Heart right ventricle (tissue), 16 donors: ENCODE measurements at regions of chr11 and their contacts with region 1.

Region 1: DNA sequence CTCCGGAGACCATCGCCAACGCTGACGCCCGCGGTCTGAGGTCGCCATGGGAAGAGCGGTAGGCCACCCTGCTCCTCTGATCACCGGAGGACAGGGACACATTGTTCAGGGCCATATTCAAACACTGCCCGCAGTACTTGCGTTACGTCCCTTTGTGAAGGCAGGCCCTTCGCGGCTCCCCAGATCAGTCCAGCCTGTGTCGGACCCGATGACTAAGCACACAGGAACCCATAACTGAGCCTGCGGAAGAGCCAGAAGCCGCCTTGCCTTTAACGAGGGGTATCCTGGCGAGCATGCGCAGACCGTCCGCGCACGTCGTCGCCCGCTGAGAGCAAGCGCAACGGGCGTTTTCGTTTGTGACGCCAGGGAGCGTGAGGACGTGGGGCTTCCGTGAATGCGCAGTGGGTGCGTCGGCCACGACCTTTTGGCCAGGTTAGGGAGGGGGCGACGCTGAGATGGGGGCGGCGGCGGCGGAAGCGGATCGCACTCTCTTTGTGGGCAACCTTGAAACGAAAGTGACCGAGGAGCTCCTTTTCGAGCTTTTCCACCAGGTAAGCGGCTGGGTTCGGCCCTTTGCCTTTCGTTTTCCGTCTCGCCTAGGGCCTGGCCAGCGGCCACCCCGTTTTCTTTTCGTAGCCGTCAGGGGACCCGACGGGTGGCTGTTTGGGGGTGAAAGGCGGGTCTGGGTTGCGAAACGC is at the starts of genes C11orf71 and RBM7:
- DNase-seq: peak; percentile 98 to 99
- ATAC-seq: peak; percentile 97 to 99 (median 98)
- H3K4me3 ChIP-seq: peak within 1 kb of the TSS; percentile 66 to 89 (median 76)
- H3K27ac ChIP-seq: peak within 1 kb of the TSS; percentile 93 to 100 (median 98)
- H3K4me1 ChIP-seq: peaks cover 0 to 73% (median 59%) of the 10 kb centered on the region in 9 donors
- H3K27me3 ChIP-seq: no peaks in the 10 kb centered on the region
- CTCF ChIP-seq: peak in 3 of 9 donors; percentile 14 to 23 (median 19)
- total RNA-seq, gene C11orf71: 7.1 to 14.4 (median 10.9) TPM
- total RNA-seq, gene RBM7: 16.8 to 29.3 (median 21.3) TPM

Region 2: GRCh38 chr11:114295676-114296604 is 104.4 kb before region 1 on chr11 and contains the start of gene NNMT:
- intact Hi-C with region 1: loop called in 1 of 10 experiments (anchors 10 kb)
- DNase-seq: peak; percentile 56 to 66
- ATAC-seq: peak; percentile 50 to 88 (median 80)
- H3K4me3 ChIP-seq: peak within 1 kb of the TSS in 9 of 10 donors; percentile 26 to 60 (median 53)
- H3K27ac ChIP-seq: peak within 1 kb of the TSS; percentile 77 to 98 (median 91)
- H3K4me1 ChIP-seq: peaks cover 2 to 49% (median 40%) of the 10 kb centered on the region in 9 donors
- H3K27me3 ChIP-seq: no peaks in the 10 kb centered on the region
- CTCF ChIP-seq: no peak
- total RNA-seq, gene NNMT: 6.9 to 111 (median 19.8) TPM

Region 3: DNA sequence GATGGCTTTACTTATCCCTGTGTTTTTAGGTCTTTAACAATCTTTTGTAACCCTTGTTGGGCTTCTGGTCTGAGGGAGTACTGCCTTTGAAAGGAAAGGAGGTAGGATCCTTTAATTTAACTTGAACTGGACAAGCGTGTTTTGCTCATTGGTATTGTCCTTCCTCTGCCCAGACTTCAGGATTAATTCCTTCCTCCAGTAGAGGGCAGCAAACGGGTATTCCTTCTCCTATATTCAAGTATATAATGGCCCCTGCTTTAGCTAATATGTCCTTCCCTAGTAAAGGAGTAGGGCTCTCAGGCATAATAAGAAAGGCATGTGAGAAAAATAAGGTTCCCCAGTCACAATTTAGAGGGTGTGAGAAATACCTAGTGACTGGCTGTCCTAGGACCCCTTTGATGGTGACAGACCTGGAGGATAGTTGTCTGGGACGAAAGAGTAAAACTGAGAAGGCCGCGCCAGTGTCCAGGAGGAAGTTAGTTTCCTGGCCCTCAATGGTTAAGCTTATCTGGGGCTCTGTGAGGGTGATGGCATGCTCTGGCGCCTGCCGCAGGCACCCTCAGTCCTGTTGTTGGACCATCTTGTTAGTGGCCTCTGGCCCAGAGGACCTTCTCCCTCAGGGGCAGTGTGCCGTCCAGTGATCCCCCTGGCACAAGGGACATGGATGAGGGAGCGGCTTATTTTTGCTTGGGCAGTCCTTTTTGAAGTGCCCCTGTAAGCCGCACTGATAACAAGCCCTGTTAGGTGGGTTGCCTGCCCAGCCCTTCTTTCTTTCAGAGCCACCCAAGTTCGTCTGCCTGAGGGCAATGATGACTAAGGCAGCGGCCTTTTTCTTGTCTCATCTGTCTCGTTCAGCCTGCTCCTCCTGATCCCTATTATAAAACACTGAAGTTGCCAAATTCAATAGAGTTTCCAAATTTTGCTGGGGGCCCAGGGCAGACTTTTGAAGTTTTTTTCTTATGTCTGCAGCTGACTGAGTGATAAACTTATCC is 51.9 kb before region 1 on chr11:
- intact Hi-C with region 1: loop called in 5 of 10 experiments (anchors 5 to 10 kb)
- DNase-seq: peak in 1 of 2 donors; percentile 64
- ATAC-seq: peak in 6 of 8 donors; percentile 64 to 78 (median 73)
- H3K4me3 ChIP-seq: no peak overlapping the region
- H3K27ac ChIP-seq: no peak overlapping the region
- H3K4me1 ChIP-seq: peaks cover 0 to 8% (median 0%) of the 10 kb centered on the region in 9 donors
- H3K27me3 ChIP-seq: no peaks in the 10 kb centered on the region
- CTCF ChIP-seq: peak; percentile 35 to 72 (median 63)

Region 4: GRCh38 chr11:114439229-114440120 is 39.1 kb after region 1 on chr11 and contains the start of gene REXO2:
- intact Hi-C with region 1: loop called in 7 of 10 experiments (anchors 5 kb)
- DNase-seq: peak; percentile 96
- ATAC-seq: peak; percentile 98 to 99 (median 99)
- H3K4me3 ChIP-seq: peak within 1 kb of the TSS; percentile 71 to 99 (median 85)
- H3K27ac ChIP-seq: peak within 1 kb of the TSS; percentile 69 to 91 (median 86)
- H3K4me1 ChIP-seq: peaks cover 4 to 46% (median 32%) of the 10 kb centered on the region in 9 donors
- H3K27me3 ChIP-seq: no peaks in the 10 kb centered on the region
- CTCF ChIP-seq: peak in 7 of 9 donors; percentile 18 to 62 (median 40)
- total RNA-seq, gene REXO2: 140 to 204 (median 174) TPM

Region 5: DNA sequence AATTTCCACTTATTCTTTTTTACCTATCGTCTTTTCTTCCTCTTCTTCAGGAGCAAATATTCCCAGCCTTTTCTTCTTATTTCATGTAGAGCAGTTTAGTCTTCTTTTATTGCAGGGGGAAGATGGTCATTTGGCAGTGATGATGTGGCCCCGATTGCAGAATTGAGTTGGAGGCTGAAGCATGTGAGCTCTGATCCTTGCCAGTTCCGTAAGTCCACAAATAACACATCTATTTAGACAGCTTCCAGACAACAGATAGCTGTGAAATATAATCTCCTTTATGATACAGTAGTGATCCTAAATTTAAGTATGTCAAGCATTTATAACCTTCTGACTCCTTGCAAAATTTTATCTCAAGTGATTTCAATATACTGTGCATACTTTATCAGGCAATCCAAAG is 66.4 kb after region 1 on chr11:
- intact Hi-C with region 1: no loop called
- DNase-seq: no peak
- ATAC-seq: peak in 3 of 8 donors; percentile 33 to 55 (median 37)
- H3K4me3 ChIP-seq: no peak overlapping the region
- H3K27ac ChIP-seq: peak overlapping the region in 2 of 10 donors; percentile 29 to 30
- H3K4me1 ChIP-seq: peaks cover 0 to 7% (median 0%) of the 10 kb centered on the region in 9 donors
- H3K27me3 ChIP-seq: no peaks in the 10 kb centered on the region
- CTCF ChIP-seq: no peak

Region 6: DNA sequence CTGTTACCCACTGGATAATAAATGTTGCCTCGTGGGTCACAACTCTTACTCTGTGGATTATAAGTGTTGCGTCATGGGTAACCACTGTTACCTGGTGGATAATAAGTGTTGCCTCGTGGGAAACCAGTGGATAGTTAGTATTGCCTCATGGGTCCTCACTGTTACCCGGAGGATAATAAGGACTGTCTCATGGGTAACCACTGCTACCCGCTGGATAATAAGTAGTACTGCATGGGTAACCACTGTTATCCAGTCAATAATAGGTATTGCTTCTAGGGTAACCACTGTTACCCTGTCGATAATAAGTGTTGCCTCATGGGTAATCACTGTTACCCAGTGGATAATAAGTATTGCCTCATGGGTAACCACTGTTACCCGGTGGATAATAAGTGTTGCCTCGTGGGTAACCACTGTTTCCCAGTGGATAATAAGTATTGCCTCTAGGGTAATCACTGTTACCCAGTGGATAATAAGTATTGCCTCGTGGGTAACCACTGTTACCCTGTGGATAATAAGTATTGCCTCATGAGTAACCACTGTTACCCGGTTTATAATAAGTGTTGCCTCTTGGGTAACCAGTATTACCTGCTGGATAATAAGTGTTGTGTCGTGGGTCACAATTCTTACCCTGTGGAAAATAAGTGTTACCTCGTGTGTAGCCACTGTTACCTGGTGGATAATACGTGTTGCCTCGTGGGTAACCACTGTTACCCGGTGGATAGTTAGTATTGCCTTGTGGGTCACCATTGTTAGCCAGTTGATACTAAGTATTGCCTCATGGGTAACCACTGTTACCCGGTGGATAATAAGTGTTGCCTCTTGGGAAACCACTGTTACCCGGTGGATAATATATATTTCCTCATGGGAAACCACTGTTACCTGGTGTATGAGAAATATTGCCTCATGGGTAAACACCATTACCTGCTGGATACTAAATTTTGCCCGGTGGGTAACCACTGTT is 210.9 kb after region 1 on chr11:
- intact Hi-C with region 1: no loop called
- DNase-seq: no peak
- ATAC-seq: no peak
- H3K4me3 ChIP-seq: no peak overlapping the region
- H3K27ac ChIP-seq: no peak overlapping the region
- H3K4me1 ChIP-seq: no peaks in the 10 kb centered on the region
- H3K27me3 ChIP-seq: no peaks in the 10 kb centered on the region
- CTCF ChIP-seq: peak in 5 of 9 donors; percentile 4 to 37 (median 15)